Kidney (tissue), 22 donors: ENCODE measurements at regions of chr14 and their contacts with region 1.

Region 1: GRCh38 chr14:105760691-105761346 is 234.4 kb downstream of the TMEM121 start:
- DNase-seq: peak in 2 of 5 donors; percentile 23 to 44
- H3K4me3 ChIP-seq: no peak overlapping the region
- H3K27ac ChIP-seq: no peak overlapping the region
- H3K4me1 ChIP-seq: no peaks in the 10 kb centered on the region
- H3K27me3 ChIP-seq: no peaks in the 10 kb centered on the region
- CTCF ChIP-seq: no peak

Region 2: GRCh38 chr14:105617201-105617777 is 143.5 kb before region 1 on chr14:
- intact Hi-C with region 1: loop called (anchors 2 kb)
- DNase-seq: no peak
- H3K4me3 ChIP-seq: no peak overlapping the region
- H3K27ac ChIP-seq: no peak overlapping the region
- H3K4me1 ChIP-seq: no peaks in the 10 kb centered on the region
- H3K27me3 ChIP-seq: no peaks in the 10 kb centered on the region
- CTCF ChIP-seq: no peak